GM12878 (cell line): ENCODE measurements at regions of chr15 and their contacts with region 1.

Region 1: GRCh38 chr15:85689729-85690128 is 105.0 kb downstream of the KLHL25 start:
- DNase-seq: peak; percentile 84
- ATAC-seq: peak; percentile 55
- H3K4me3 ChIP-seq: peak overlapping the region; percentile 62
- H3K27ac ChIP-seq: peak overlapping the region; percentile 97
- H3K4me1 ChIP-seq: peaks cover 67% of the 10 kb centered on the region
- H3K27me3 ChIP-seq: no peaks in the 10 kb centered on the region
- CTCF ChIP-seq: no peak
- EP300 ChIP-seq: no peak; a peak in 1 of 4 replicates
- POLR2A ChIP-seq: peak; percentile 87
- RAD21 ChIP-seq: no peak

Region 2: DNA sequence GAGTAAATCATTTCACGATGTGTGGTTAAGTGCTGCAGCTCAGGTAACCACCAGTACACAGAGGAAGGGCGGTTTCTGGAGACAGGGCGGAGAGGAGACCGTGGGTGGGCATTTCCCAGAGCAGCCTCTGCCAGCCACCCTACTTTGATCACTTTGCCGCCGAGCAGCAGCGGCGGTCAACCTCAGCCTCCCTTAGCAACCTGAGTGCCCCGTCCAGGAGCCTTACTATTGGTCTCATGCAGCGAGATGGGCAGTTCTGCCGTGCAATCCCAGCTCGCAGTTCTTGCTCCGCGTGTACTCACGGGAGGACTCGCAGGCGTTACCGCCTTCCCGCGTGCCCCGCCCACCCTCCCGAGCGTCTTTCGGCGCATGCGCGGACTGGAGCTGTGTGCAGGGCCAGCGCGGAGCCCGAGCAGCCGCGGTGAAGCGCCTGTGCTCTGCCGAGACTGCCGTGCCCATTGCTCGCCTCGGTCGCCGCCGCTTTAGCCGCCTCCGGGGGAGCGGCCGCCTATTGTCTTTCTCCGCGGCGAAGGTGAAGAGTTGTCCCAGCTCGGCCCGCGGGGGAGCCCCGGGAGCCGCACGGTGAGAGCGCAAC is 309.4 kb before region 1 on chr15 and contains the start of gene AKAP13:
- CTCF ChIA-PET with region 1: no interaction called
- POLR2A ChIA-PET with region 1: interaction called, 9 read pairs
- RAD21 ChIA-PET with region 1: no interaction called
- SMC1A ChIA-PET with region 1: no interaction called
- in situ Hi-C with region 1: no loop called
- intact Hi-C with region 1: loop called (anchors 10 kb)
- DNase-seq: peak; percentile 98
- ATAC-seq: peak; percentile 89
- H3K4me3 ChIP-seq: peak within 1 kb of the TSS; percentile 80
- H3K27ac ChIP-seq: peak within 1 kb of the TSS; percentile 78
- H3K4me1 ChIP-seq: peaks cover 12% of the 10 kb centered on the region; the same call in 1 of the 2 replicates
- H3K27me3 ChIP-seq: no peaks in the 10 kb centered on the region; a peak in 2 of 4 replicates
- CTCF ChIP-seq: no peak
- EP300 ChIP-seq: no peak
- POLR2A ChIP-seq: peak; percentile 88
- RAD21 ChIP-seq: no peak
- polyA plus RNA-seq, gene AKAP13: 14.4 to 21.5 TPM

Region 3: DNA sequence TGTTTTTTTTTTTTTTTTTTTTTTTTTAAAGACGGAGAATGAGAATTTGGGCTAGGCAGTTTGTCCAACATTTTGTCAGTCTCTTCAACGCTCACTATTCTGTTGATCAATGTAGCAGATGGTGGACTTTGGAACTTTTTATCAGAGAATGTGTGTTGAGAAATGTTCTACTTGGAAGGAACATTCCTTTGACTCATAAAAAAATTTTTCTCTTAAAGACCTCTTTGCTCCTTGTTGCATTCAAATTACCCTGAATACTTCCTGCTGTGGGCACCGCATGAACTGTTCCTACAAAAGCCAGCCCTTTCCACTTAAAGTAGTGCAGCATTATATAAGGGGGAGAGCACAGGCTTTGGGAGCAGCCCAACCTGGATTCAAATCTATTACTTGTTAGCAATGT is 126.4 kb before region 1 on chr15:
- CTCF ChIA-PET with region 1: no interaction called
- POLR2A ChIA-PET with region 1: no interaction called
- RAD21 ChIA-PET with region 1: no interaction called
- SMC1A ChIA-PET with region 1: no interaction called
- in situ Hi-C with region 1: no loop called
- intact Hi-C with region 1: no loop called
- DNase-seq: no peak
- ATAC-seq: no peak
- H3K4me3 ChIP-seq: no peak overlapping the region
- H3K27ac ChIP-seq: no peak overlapping the region
- H3K4me1 ChIP-seq: no peaks in the 10 kb centered on the region
- H3K27me3 ChIP-seq: no peaks in the 10 kb centered on the region
- CTCF ChIP-seq: no peak
- EP300 ChIP-seq: no peak
- POLR2A ChIP-seq: no peak
- RAD21 ChIP-seq: no peak

Region 4: DNA sequence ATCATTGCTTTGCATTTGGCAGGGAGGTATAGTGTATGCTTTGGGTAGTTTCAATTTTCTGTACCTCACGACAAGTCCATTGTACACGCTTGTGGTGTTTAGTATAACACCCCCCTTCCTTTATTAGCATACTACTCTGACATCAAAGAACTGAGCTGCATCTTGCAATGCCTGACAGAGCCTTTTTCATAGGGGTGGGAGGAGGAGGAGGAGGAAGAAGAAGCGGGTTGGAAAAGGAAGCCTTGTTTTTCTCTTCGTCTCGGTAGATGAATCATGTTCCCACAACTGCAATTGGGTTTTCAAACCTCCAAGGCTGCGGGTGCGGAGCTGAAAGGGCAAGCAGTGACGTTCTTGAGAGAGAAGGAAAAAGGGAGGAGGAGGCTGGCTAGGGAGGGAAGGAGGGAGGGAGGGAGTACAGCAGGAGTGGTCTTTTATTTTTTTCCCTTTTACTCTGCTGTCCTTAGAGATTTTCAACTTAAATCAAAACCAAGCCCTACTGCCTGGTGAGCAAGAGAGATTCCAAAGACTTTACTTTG is 70.7 kb before region 1 on chr15:
- CTCF ChIA-PET with region 1: interaction called, 14 read pairs
- POLR2A ChIA-PET with region 1: interaction called, 7 read pairs
- RAD21 ChIA-PET with region 1: interaction called, 14 read pairs
- SMC1A ChIA-PET with region 1: interaction called, 34 read pairs
- in situ Hi-C with region 1: no loop called
- intact Hi-C with region 1: loop called (anchors 1 kb)
- DNase-seq: no peak
- ATAC-seq: peak; percentile 88
- H3K4me3 ChIP-seq: no peak overlapping the region
- H3K27ac ChIP-seq: peak overlapping the region; percentile 34; the same call in 1 of the 2 replicates
- H3K4me1 ChIP-seq: peaks cover 14% of the 10 kb centered on the region
- H3K27me3 ChIP-seq: no peaks in the 10 kb centered on the region
- CTCF ChIP-seq: no peak
- EP300 ChIP-seq: no peak
- POLR2A ChIP-seq: no peak
- RAD21 ChIP-seq: no peak

Region 5: GRCh38 chr15:85702321-85703101 is 12.8 kb after region 1 on chr15:
- CTCF ChIA-PET with region 1: interaction called, 93 read pairs
- POLR2A ChIA-PET with region 1: interaction called, 217 read pairs
- RAD21 ChIA-PET with region 1: interaction called, 173 read pairs
- SMC1A ChIA-PET with region 1: interaction called, 311 read pairs
- in situ Hi-C with region 1: no loop called
- intact Hi-C with region 1: loop called (anchors 1 kb)
- DNase-seq: no peak
- ATAC-seq: peak; percentile 42
- H3K4me3 ChIP-seq: peak overlapping the region; percentile 45; the same call in 1 of the 2 replicates
- H3K27ac ChIP-seq: peak overlapping the region; percentile 99
- H3K4me1 ChIP-seq: peaks cover 56% of the 10 kb centered on the region
- H3K27me3 ChIP-seq: no peaks in the 10 kb centered on the region
- CTCF ChIP-seq: no peak
- EP300 ChIP-seq: no peak; a peak in 1 of 4 replicates
- POLR2A ChIP-seq: 0 out of 2 replicates have a peak, but pooled peaks have one; percentile 27
- RAD21 ChIP-seq: no peak

Region 6: DNA sequence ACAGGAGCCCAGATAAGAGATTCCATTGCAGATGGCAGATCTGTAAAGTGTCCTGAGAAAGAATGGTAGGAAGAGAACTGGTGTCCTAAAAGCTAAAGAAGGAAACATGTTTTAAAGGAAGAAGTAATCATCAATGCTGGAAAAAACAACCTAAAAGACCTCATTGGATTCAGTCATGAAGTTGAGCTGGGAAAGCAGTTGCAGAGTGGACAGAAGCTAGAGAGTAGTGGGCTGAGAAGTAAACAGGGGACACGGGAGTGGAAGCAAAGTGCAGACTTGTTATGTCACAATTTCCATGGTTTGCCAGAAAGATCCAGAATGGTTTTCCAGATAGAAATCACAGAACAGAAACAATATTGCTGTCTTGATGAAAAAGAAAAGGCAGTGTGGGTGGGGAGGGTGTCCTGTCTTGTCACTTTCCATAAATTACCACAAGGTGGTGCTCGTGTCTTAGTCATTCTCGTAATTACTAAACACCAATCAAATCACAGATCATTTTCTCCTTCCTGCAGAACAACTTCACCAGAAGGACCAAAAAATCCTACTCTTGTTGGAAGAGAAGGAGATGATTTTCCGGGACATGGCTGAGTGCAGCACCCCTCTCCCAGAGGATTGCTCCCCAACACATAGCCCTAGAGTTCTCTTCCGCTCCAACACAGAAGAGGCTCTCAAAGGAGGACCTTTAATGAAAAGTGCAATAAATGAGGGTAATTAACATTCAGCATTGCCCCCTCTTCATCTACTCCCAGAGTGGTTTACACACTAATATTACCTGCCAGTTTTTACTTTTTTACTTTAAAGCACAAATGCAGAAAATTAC is 40.5 kb after region 1 on chr15:
- CTCF ChIA-PET with region 1: interaction called, 8 read pairs
- POLR2A ChIA-PET with region 1: no interaction called
- RAD21 ChIA-PET with region 1: interaction called, 9 read pairs
- SMC1A ChIA-PET with region 1: interaction called, 10 read pairs
- in situ Hi-C with region 1: no loop called
- intact Hi-C with region 1: no loop called
- DNase-seq: no peak
- ATAC-seq: peak; percentile 97
- H3K4me3 ChIP-seq: no peak overlapping the region
- H3K27ac ChIP-seq: no peak overlapping the region
- H3K4me1 ChIP-seq: no peaks in the 10 kb centered on the region
- H3K27me3 ChIP-seq: no peaks in the 10 kb centered on the region
- CTCF ChIP-seq: peak; percentile 50 to 74 (median 72); a peak in 5 of 6 replicates
- EP300 ChIP-seq: no peak
- POLR2A ChIP-seq: no peak
- RAD21 ChIP-seq: peak; percentile 72